ENCODE measurements at regions of chr17 and their contacts with region 1.

Region 1: GRCh38 chr17:64420143-64420971 is 28.6 kb upstream of the MILR1 start:
- DNase-seq: peak; percentile 85
- ATAC-seq: peak; percentile 90 to 91
- H3K4me3 ChIP-seq: no peak overlapping the region
- H3K27ac ChIP-seq: 0 out of 6 replicates have a peak overlapping the region, but pooled peaks of 1 of the 2 experiments have one; percentile 9
- H3K4me1 ChIP-seq: no peaks in the 10 kb centered on the region
- CTCF ChIP-seq: peak; percentile 97
- EP300 ChIP-seq: no peak
- POLR2A ChIP-seq: no peak
- RAD21 ChIP-seq: peak; percentile 95 to 96

Region 2: DNA sequence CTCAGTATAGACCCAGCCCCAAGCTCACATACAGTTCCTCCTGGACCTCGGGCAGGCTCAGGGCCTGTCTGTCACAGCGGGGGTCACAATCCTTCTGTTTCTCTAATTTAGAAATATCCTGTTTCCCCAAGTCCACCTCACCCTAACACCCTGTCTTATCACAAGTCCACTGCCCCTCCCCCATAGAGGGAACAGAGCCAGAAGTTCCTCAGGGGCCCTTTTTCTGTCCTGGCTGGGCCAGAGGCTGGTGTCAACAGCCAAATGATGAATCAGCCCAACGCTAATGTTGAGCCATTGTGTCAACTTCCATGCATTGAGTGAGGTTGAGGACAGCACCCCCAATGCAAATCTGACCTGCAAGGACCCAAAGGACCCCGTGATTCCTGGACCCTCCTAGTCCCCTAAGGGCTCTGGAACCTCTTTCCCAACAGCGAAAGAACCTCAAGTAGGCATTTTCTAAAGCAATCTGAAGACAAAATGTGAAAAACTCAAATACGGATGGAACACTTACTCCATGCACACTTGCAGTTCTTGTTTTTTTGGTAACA is 88.3 kb before region 1 on chr17:
- CTCF ChIA-PET with region 1: interaction called, 46 read pairs
- POLR2A ChIA-PET with region 1: no interaction called
- DNase-seq: no peak
- ATAC-seq: no peak
- H3K4me3 ChIP-seq: no peak overlapping the region
- H3K27ac ChIP-seq: peak overlapping the region in 1 of 2 experiments; percentile 50; a peak in 3 of 6 replicates
- H3K4me1 ChIP-seq: peaks cover 14% of the 10 kb centered on the region; the same call in 1 of the 3 replicates
- CTCF ChIP-seq: no peak
- EP300 ChIP-seq: no peak
- POLR2A ChIP-seq: no peak
- RAD21 ChIP-seq: no peak

Region 3: GRCh38 chr17:64378890-64379354 is 41.4 kb before region 1 on chr17:
- CTCF ChIA-PET with region 1: interaction called, 23 read pairs
- POLR2A ChIA-PET with region 1: no interaction called
- DNase-seq: no peak
- ATAC-seq: no peak
- H3K4me3 ChIP-seq: no peak overlapping the region
- H3K27ac ChIP-seq: no peak overlapping the region
- H3K4me1 ChIP-seq: 0 out of 3 replicates have a peak, but pooled peaks cover under 1% of the 10 kb centered on the region
- CTCF ChIP-seq: no peak
- EP300 ChIP-seq: no peak
- POLR2A ChIP-seq: no peak
- RAD21 ChIP-seq: no peak

Region 4: DNA sequence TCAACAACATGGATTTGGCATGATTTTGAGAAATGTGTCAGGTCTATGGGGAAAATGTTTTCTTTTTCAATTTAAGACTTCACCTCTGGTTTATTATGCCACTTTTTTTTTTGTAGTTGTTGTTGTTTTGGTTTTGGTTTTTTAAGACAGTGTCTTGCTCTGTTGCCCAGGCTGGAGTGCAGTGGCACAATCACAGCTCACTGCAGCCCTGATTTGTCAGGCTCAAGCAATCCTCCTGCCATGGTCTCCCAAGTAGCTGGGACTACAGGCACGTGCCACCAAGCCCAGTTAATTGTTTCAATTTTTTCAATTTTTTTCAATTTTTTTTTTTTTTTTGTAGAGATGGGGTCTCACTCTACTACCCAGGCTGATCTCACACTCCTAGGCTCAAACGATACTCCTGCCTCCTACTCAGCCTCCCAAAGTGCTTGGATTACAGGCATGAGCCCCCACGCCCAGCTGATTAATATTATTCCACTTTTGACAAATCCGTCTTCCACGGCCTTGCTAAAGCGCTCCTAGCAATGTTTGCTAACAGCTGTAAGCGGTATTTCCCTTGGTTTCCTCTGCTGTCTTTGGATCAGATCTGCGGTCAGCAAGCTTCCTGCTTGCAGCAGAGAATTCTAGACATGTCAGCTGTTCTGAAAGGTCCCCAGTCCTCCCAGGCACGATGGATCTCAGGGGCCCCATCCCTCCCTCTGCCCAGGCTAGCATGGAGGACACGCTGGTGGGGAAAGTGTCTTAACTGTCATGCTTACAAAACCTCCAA is 21.6 kb after region 1 on chr17:
- CTCF ChIA-PET with region 1: interaction called, 163 read pairs
- POLR2A ChIA-PET with region 1: no interaction called
- DNase-seq: no peak
- ATAC-seq: peak; percentile 45 to 60; a peak in 4 of 6 replicates
- H3K4me3 ChIP-seq: no peak overlapping the region
- H3K27ac ChIP-seq: peak overlapping the region; percentile 30 to 71
- H3K4me1 ChIP-seq: peaks cover 22% of the 10 kb centered on the region
- CTCF ChIP-seq: no peak
- EP300 ChIP-seq: no peak
- POLR2A ChIP-seq: no peak
- RAD21 ChIP-seq: no peak

Region 5: DNA sequence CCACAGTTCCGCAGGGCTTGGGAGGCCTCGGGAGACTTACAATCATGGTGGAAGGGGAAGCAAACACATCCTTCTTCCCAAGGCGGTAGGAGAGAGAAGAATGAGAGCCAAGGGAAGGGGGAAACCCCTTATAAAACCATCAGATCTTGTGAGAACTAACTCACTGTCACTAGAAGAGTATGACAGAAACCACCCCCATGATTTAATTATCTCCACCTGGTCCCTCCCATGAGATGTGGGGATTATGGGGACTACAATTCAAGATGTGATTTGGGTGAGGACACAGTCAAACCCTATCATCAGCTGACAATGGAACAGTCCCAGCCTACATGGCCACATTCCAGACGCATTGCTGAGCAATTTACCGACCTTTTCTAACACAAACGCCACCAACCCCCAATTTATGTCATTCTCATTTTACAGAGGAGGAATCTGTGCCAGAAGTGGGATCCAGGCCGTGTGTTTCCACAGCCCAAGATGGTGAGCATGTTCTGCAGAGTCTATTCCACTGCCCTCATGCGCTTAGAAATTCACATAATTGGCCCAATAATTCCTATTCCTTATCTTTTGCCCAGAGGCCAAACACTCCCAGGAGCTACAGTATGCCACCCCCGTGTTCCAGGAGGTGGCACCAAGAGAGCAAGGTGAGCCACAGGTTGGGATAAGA is 45.8 kb after region 1 on chr17:
- CTCF ChIA-PET with region 1: interaction called, 48 read pairs
- POLR2A ChIA-PET with region 1: no interaction called
- DNase-seq: no peak
- ATAC-seq: no peak; a peak in 2 of 6 replicates
- H3K4me3 ChIP-seq: no peak overlapping the region
- H3K27ac ChIP-seq: no peak overlapping the region
- H3K4me1 ChIP-seq: no peaks in the 10 kb centered on the region
- CTCF ChIP-seq: no peak
- EP300 ChIP-seq: no peak
- POLR2A ChIP-seq: no peak
- RAD21 ChIP-seq: no peak

Region 6: GRCh38 chr17:64506576-64507477 is 86.5 kb after region 1 on chr17 and contains the start of gene CEP95:
- CTCF ChIA-PET with region 1: interaction called, 42 read pairs
- POLR2A ChIA-PET with region 1: interaction called, 32 read pairs
- DNase-seq: no peak
- ATAC-seq: peak; percentile 79
- H3K4me3 ChIP-seq: peak within 1 kb of the TSS; percentile 91
- H3K27ac ChIP-seq: peak within 1 kb of the TSS; percentile 96 to 97
- H3K4me1 ChIP-seq: peaks cover 40% of the 10 kb centered on the region
- CTCF ChIP-seq: no peak
- EP300 ChIP-seq: no peak; a peak in 1 of 5 replicates
- POLR2A ChIP-seq: peak; percentile 70
- RAD21 ChIP-seq: no peak
- polyA plus RNA-seq, gene CEP95: 53.5 and 73.0 TPM in 2 replicates

Measured in A549 (cell line).